K562 (cell line): ENCODE measurements at regions of chr21 and their contacts with region 1.

Region 1: GRCh38 chr21:36927719-36928117 is 38.8 kb downstream of the HLCS start:
- DNase-seq: peak; percentile 78 to 84 (median 83)
- ATAC-seq: peak; percentile 97
- H3K4me3 ChIP-seq: no peak overlapping the region
- H3K27ac ChIP-seq: no peak overlapping the region
- H3K4me1 ChIP-seq: peaks cover 0 to 3% of the 10 kb centered on the region in 2 experiments; a peak in 1 of 5 replicates
- H3K27me3 ChIP-seq: no peaks in the 10 kb centered on the region
- CTCF ChIP-seq: peak; percentile 89 to 97 (median 95)
- EP300 ChIP-seq: no peak
- POLR2A ChIP-seq: no peak
- RAD21 ChIP-seq: peak; percentile 80 to 91

Region 2: DNA sequence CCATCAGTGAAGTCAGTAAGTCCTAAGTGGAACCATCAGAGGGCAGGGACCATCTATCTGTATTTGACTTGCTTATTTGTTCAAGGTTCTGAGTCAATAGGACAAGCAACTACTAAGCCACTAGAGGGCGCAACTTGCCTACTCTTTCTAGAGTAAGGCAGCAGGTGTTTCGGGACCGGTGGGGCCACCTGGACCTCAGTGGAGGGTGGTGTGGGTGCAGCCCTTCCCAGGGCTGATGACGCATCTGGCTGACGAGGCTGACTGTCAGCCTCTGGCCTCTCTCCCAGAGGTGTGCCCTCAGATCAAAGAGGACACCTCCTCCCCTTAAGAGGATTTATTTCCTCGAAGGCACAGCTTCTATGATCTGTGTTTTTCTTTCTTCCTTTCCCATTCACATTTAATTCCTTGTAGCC is 786.2 kb before region 1 on chr21:
- CTCF ChIA-PET with region 1: no interaction called
- POLR2A ChIA-PET with region 1: no interaction called
- in situ Hi-C with region 1: loop called (anchors 10 kb)
- intact Hi-C with region 1: no loop called
- DNase-seq: peak; percentile 68 to 90 (median 84)
- ATAC-seq: peak; percentile 98
- H3K4me3 ChIP-seq: no peak overlapping the region
- H3K27ac ChIP-seq: no peak overlapping the region
- H3K4me1 ChIP-seq: no peaks in the 10 kb centered on the region; a peak in 1 of 5 replicates
- H3K27me3 ChIP-seq: peaks cover 6 to 39% of the 10 kb centered on the region in 2 experiments; a peak in 3 of 5 replicates
- CTCF ChIP-seq: peak; percentile 93 to 98 (median 95)
- EP300 ChIP-seq: no peak
- POLR2A ChIP-seq: no peak
- RAD21 ChIP-seq: peak; percentile 96 to 98

Region 3: DNA sequence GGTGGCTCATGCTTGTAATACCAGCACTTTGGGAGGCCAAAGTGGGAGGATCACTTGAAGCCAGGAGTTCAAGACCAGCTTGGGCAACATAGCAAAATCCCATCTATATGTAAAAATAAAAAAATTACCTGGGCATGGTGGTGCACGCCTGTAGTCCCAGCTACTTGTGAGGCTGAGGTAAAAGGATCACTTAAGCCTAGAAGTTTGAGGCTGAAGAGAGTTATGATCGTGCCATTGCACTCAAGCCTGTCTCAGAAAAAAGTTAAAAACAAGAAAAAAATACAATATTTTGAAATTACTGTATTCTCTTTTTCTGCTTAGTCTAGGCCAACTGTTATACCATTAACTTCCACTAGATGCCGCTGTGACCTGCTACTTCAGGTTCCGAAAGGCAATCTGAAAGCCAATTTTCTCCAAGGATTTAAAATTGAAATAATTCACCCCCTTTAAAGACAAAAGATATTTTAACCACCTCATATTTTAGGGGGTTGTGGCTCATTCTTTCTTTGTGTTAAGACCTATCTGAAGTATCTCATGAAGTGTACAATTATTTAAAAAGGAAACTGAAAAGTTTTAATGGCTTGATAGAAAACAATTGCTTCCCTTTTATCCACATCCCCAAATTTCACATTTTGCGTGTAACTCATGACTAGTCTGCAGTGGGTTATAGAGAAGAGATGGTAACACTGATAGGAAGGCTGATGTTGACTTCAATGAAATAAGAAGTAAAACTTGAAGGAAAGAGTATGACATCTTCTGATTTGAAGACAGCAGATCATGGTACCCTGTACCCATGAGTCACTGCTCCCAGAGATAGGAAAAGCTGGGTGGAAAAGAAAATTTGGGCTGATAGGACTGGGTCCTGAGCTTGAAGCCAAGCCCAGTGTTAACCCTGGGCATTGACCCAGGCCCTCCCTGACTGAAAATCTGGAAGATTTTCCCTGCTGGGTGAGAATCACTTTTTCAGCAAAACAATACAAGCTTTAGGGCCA is 423.4 kb before region 1 on chr21:
- CTCF ChIA-PET with region 1: interaction called, 12 read pairs
- POLR2A ChIA-PET with region 1: no interaction called
- in situ Hi-C with region 1: loop called (anchors 5 kb)
- intact Hi-C with region 1: loop called (anchors 5 kb)
- DNase-seq: peak; percentile 36 to 69 (median 61)
- ATAC-seq: no peak
- H3K4me3 ChIP-seq: no peak overlapping the region
- H3K27ac ChIP-seq: no peak overlapping the region
- H3K4me1 ChIP-seq: no peaks in the 10 kb centered on the region
- H3K27me3 ChIP-seq: peaks cover 22 to 41% of the 10 kb centered on the region in 2 experiments
- CTCF ChIP-seq: peak; percentile 66 to 95 (median 86)
- EP300 ChIP-seq: no peak
- POLR2A ChIP-seq: no peak
- RAD21 ChIP-seq: peak; percentile 79 to 88

Region 4: GRCh38 chr21:36661511-36662309 is 266.0 kb before region 1 on chr21:
- CTCF ChIA-PET with region 1: no interaction called
- POLR2A ChIA-PET with region 1: no interaction called
- in situ Hi-C with region 1: no loop called
- intact Hi-C with region 1: loop called (anchors 1 kb)
- DNase-seq: peak; percentile 35 to 72 (median 50)
- ATAC-seq: peak; percentile 81
- H3K4me3 ChIP-seq: no peak overlapping the region
- H3K27ac ChIP-seq: no peak overlapping the region
- H3K4me1 ChIP-seq: no peaks in the 10 kb centered on the region
- H3K27me3 ChIP-seq: peaks cover 32 to 56% of the 10 kb centered on the region in 2 experiments
- CTCF ChIP-seq: peak; percentile 67 to 76 (median 73)
- EP300 ChIP-seq: no peak
- POLR2A ChIP-seq: no peak
- RAD21 ChIP-seq: peak; percentile 34 to 80; a peak in 3 of 4 replicates

Region 5: GRCh38 chr21:36747815-36748383 is 179.8 kb before region 1 on chr21:
- CTCF ChIA-PET with region 1: interaction called, 10 read pairs
- POLR2A ChIA-PET with region 1: no interaction called
- in situ Hi-C with region 1: loop called (anchors 10 kb)
- intact Hi-C with region 1: loop called (anchors 5 kb)
- DNase-seq: peak; percentile 70 to 87 (median 81)
- ATAC-seq: peak; percentile 90
- H3K4me3 ChIP-seq: peak overlapping the region; percentile 21
- H3K27ac ChIP-seq: no peak overlapping the region
- H3K4me1 ChIP-seq: peaks cover 0 to 21% of the 10 kb centered on the region in 2 experiments; a peak in 3 of 5 replicates
- H3K27me3 ChIP-seq: peaks cover 34 to 42% of the 10 kb centered on the region in 2 experiments; a peak in 4 of 5 replicates
- CTCF ChIP-seq: peak in 2 of 3 experiments; percentile 42 to 71; a peak in 3 of 6 replicates
- EP300 ChIP-seq: no peak
- POLR2A ChIP-seq: no peak
- RAD21 ChIP-seq: peak in 1 of 2 experiments; percentile 54; a peak in 2 of 4 replicates

Region 6: DNA sequence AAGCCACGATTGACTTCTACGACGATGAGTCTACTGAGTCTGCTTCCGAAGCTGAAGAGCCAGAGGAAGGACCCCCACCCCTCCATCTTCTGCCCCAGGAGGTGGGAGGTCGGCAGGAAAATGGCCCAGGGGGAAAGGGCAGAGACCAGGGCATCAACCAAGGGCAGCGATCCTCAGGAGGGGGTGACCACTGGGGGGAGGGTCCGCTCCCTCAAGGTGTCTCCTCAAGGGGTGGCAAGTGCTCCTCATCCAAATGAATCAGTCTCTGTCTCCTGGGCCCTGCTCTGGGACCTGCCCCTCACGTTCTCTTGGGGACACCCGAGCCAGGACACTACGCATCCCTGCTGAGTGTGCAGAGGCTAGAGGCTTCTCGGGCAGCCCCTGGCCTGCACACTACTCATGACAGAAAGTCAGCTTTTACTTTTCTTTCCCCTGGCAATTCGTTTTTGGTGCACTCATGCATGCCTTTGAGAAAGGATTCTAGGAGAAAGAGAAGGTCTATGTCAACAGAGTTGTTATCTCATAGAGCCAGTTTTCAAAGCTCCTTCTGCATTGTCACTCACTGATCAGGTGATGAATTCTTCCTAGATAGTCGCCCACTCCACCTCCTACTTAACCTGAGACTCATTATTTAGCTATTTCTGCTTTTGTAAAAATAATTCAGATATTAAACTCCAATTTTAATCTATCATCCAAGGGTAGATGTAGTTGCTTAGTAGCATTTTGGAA is 90.4 kb after region 1 on chr21:
- CTCF ChIA-PET with region 1: no interaction called
- POLR2A ChIA-PET with region 1: no interaction called
- in situ Hi-C with region 1: no loop called
- intact Hi-C with region 1: no loop called
- DNase-seq: peak in 3 of 4 experiments; percentile 29 to 68 (median 52)
- ATAC-seq: peak; percentile 82
- H3K4me3 ChIP-seq: no peak overlapping the region
- H3K27ac ChIP-seq: no peak overlapping the region; the same call in 2 of the 3 replicates
- H3K4me1 ChIP-seq: peaks cover 10 to 11% of the 10 kb centered on the region in 2 experiments; a peak in 4 of 5 replicates
- H3K27me3 ChIP-seq: peaks cover 0 to 2% of the 10 kb centered on the region in 2 experiments; a peak in 1 of 5 replicates
- CTCF ChIP-seq: no peak
- EP300 ChIP-seq: peak; percentile 71
- POLR2A ChIP-seq: no peak
- RAD21 ChIP-seq: no peak